Activated B cell treated with CpG ODN at 0.5 μM for 24 hours (primary cell): ENCODE measurements at regions of chr13 and their contacts with region 1.

Region 1: GRCh38 chr13:47250146-47250545 is 353.3 kb upstream of the HTR2A start:
- DNase-seq: no peak
- ATAC-seq: no peak
- H3K4me3 Mint-ChIP-seq: no peak overlapping the region
- H3K27ac Mint-ChIP-seq: no peak overlapping the region
- H3K4me1 Mint-ChIP-seq: no peaks in the 10 kb centered on the region
- H3K27me3 Mint-ChIP-seq: peaks cover 8% of the 10 kb centered on the region
- CTCF ChIP-seq: no peak

Region 2: GRCh38 chr13:45830121-45830520 is 1420.0 kb before region 1 on chr13:
- CTCF ChIA-PET with region 1: no interaction called
- POLR2A ChIA-PET with region 1: interaction called, 11 read pairs
- intact Hi-C with region 1: no loop called
- DNase-seq: no peak
- ATAC-seq: no peak
- H3K4me3 Mint-ChIP-seq: no peak overlapping the region
- H3K27ac Mint-ChIP-seq: no peak overlapping the region
- H3K4me1 Mint-ChIP-seq: no peaks in the 10 kb centered on the region
- H3K27me3 Mint-ChIP-seq: peaks cover 9% of the 10 kb centered on the region
- CTCF ChIP-seq: no peak

Region 3: DNA sequence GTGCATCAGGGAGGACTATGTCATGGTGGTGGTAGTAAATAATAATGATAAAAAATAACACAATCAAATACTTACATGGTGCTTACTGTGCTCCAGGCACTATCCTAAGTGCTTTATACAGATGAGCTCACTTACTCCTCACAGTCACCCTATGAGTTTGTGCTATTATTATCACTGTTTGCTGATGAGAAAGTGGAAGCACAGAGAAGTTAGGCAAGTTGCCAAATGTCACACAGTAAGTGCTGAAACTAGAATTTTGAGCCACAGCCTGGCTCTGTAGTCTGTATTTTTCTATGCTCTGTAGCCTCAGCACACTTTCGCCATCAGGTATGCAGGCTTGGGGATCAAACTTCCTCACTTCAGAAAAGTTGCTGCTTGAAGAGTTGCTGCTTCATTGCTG is 399.9 kb before region 1 on chr13:
- CTCF ChIA-PET with region 1: no interaction called
- POLR2A ChIA-PET with region 1: no interaction called
- intact Hi-C with region 1: no loop called
- DNase-seq: no peak
- ATAC-seq: no peak
- H3K4me3 Mint-ChIP-seq: no peak overlapping the region
- H3K27ac Mint-ChIP-seq: no peak overlapping the region
- H3K4me1 Mint-ChIP-seq: no peaks in the 10 kb centered on the region
- H3K27me3 Mint-ChIP-seq: peaks cover 12% of the 10 kb centered on the region
- CTCF ChIP-seq: no peak